ENCODE measurements at regions of chr11 and their contacts with region 1.

Region 1: GRCh38 chr11:27506200-27507182 is at the start of gene LIN7C:
- DNase-seq: peak; percentile 82 to 98
- ATAC-seq: peak; percentile 90 to 98 (median 92)
- H3K4me3 ChIP-seq: peak within 1 kb of the TSS; percentile 94
- H3K4me3 Mint-ChIP-seq: peak within 1 kb of the TSS; percentile 95
- H3K27ac ChIP-seq: peak within 1 kb of the TSS; percentile 97
- H3K27ac Mint-ChIP-seq: peak within 1 kb of the TSS; percentile 91 to 99
- H3K4me1 ChIP-seq: peaks cover 12% of the 10 kb centered on the region
- H3K4me1 Mint-ChIP-seq: peaks cover 32 to 53% of the 10 kb centered on the region in 2 donors
- H3K27me3 ChIP-seq: no peaks in the 10 kb centered on the region
- H3K27me3 Mint-ChIP-seq: no peaks in the 10 kb centered on the region
- CTCF ChIP-seq: peak; percentile 22
- total RNA-seq, gene LIN7C: 16.4 to 25.3 (median 22.5) TPM

Region 2: GRCh38 chr11:26187639-26188038 is 1318.9 kb before region 1 on chr11:
- intact Hi-C with region 1: no loop called
- DNase-seq: no peak
- ATAC-seq: no peak
- H3K4me3 ChIP-seq: no peak overlapping the region
- H3K4me3 Mint-ChIP-seq: no peak overlapping the region
- H3K27ac ChIP-seq: no peak overlapping the region
- H3K27ac Mint-ChIP-seq: no peak overlapping the region
- H3K4me1 ChIP-seq: no peaks in the 10 kb centered on the region
- H3K4me1 Mint-ChIP-seq: no peaks in the 10 kb centered on the region
- H3K27me3 ChIP-seq: no peaks in the 10 kb centered on the region
- H3K27me3 Mint-ChIP-seq: no peaks in the 10 kb centered on the region
- CTCF ChIP-seq: no peak

Region 3: GRCh38 chr11:27362749-27363575 is 143.5 kb before region 1 on chr11 and contains the start of gene CCDC34:
- intact Hi-C with region 1: loop called (anchors 1 kb)
- DNase-seq: peak; percentile 82 to 96
- ATAC-seq: peak; percentile 96 to 99 (median 99)
- H3K4me3 ChIP-seq: peak within 1 kb of the TSS; percentile 81
- H3K4me3 Mint-ChIP-seq: peak within 1 kb of the TSS; percentile 89
- H3K27ac ChIP-seq: peak within 1 kb of the TSS; percentile 1
- H3K27ac Mint-ChIP-seq: peak within 1 kb of the TSS; percentile 81 to 86
- H3K4me1 ChIP-seq: peaks cover 5% of the 10 kb centered on the region
- H3K4me1 Mint-ChIP-seq: peaks cover 19 to 23% of the 10 kb centered on the region in 2 donors
- H3K27me3 ChIP-seq: no peaks in the 10 kb centered on the region
- H3K27me3 Mint-ChIP-seq: peaks cover 0 to 7% of the 10 kb centered on the region in 2 donors
- CTCF ChIP-seq: no peak
- total RNA-seq, gene CCDC34: 0.99 to 3.0 (median 1.2) TPM